HepG2 (cell line): ENCODE measurements at regions of chr7 and their contacts with region 1.

Region 1: DNA sequence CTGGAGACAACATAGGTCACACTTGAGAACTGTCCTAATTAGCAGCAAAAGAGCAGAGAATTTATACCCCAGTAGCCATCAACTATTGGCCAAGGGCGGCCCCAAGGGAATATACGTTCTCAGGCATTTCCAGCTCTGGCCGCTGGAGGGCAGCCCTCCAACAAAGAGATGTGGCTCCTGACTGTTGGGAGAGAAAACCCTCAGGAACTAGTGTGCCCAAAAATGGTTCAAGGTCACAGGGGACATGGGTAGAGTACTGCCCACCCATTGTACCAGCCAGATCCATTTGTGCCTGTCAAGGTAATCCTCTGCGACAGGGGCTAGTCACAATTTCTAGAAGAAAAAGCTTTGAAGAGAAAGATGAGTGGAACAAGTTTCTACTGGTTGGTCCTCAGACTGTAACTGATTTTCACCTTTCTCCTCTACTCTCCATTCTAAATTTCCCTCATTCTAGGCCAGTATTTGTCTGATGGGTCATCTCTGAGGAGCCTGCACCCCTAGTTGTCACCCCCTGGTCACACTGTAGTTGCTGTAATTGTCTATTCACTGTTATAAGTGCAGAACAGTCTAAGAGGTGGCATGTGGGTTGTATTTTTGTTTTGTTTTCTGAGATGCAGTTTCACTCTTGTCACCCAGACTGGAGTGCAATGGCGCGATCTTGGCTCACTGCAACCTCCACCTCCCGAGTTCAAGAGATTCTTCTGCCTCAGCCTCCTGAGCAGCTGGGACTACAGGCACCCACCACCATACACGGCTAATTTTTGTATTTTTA is 14.7 kb upstream of the C7orf33 start:
- DNase-seq: peak; percentile 39
- ATAC-seq: peak; percentile 95
- H3K4me3 ChIP-seq: no peak overlapping the region
- H3K27ac ChIP-seq: no peak overlapping the region
- H3K4me1 ChIP-seq: no peaks in the 10 kb centered on the region
- H3K27me3 ChIP-seq: no peaks in the 10 kb centered on the region; a peak in 1 of 5 replicates
- CTCF ChIP-seq: peak; percentile 85
- EP300 ChIP-seq: no peak
- POLR2A ChIP-seq: no peak
- RAD21 ChIP-seq: peak; percentile 70; the same call in 1 of the 2 replicates

Region 2: GRCh38 chr7:148763622-148764021 is 187.8 kb after region 1 on chr7:
- CTCF ChIA-PET with region 1: no interaction called
- POLR2A ChIA-PET with region 1: no interaction called
- in situ Hi-C with region 1: no loop called
- intact Hi-C with region 1: loop called (anchors 10 kb)
- DNase-seq: no peak
- ATAC-seq: no peak
- H3K4me3 ChIP-seq: no peak overlapping the region
- H3K27ac ChIP-seq: no peak overlapping the region
- H3K4me1 ChIP-seq: no peaks in the 10 kb centered on the region
- H3K27me3 ChIP-seq: no peaks in the 10 kb centered on the region
- CTCF ChIP-seq: no peak
- EP300 ChIP-seq: no peak
- POLR2A ChIP-seq: no peak
- RAD21 ChIP-seq: no peak